Aorta (tissue), 5 donors: ENCODE measurements at regions of chr3 and their contacts with region 1.

Region 1: DNA sequence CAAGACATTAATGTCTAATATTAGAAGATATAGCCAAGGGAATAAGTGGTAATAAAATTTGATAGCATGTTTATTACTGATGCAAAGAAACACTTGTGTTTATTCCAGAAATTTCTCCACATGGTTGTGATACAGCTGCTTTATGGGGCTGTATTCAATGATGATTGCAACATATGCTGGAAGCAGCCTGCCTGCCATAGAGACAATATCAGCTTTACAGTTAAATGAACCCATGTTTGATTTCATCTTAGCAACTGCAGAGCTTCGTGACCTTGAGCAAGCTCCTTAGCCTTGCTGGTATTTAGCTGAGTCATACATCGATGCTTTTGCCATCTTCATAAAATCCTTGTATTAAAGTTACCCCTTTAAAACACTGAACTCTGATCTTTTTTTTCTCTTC is 168.1 kb upstream of the STAC start:
- DNase-seq: no peak
- ATAC-seq: no peak
- H3K4me3 ChIP-seq: no peak overlapping the region
- H3K27ac ChIP-seq: no peak overlapping the region
- H3K4me1 ChIP-seq: peaks cover 1 to 8% of the 10 kb centered on the region in 2 donors
- H3K27me3 ChIP-seq: no peaks in the 10 kb centered on the region

Region 2: DNA sequence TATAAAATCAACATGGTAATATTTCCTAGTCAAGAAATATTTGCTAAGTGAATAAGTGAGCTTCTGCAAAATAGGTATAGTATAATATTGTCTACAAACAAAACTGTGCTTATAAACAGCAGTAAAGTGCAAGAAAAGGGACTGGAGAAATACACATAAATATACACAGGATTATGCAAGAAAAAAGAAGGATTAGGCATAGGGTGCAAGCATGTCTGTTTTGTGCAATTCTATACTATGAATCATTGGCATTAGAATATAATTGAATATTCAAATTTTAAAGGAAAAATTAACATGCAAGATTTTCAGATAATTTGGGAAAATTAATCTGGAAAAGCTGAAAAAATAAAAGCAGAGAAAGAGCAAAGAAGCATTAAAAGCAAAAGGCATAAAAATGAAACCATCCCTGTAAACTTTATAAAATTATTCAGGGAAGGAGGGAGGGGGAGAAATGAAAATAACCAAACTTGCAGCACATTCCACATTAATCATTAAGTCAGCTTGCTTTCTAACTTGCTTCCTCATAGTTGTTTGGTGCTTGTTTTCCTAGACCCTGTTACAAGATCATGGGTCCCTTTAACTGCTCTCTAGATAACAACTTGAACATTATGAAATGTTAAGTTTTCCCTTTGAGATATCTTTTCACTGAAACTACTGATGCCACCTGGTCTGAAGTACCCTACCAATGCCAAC is 20.7 kb after region 1 on chr3:
- intact Hi-C with region 1: no loop called
- DNase-seq: no peak
- ATAC-seq: no peak
- H3K4me3 ChIP-seq: no peak overlapping the region
- H3K27ac ChIP-seq: no peak overlapping the region
- H3K4me1 ChIP-seq: no peaks in the 10 kb centered on the region
- H3K27me3 ChIP-seq: no peaks in the 10 kb centered on the region

Region 3: DNA sequence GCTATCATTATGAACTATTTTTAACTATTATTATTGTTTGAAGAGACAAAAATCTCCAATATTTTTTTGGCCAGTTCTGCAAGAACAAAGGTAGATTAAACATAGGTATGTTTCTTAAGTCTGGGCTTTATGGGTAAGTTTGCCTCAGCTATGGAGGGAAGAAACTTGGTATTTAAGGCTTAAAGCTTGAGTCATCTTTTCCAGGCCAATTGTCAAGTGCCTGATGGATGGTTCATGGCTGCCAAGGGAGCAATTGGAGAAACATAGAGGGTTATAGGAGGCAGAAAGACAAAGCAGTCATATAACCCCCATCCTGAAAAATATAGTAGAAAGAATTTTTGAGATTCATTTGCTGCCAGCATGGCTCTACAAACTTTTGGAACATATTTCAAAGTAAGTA is 160.8 kb after region 1 on chr3:
- intact Hi-C with region 1: loop called in 1 of 2 experiments (anchors 5 kb)
- DNase-seq: no peak
- ATAC-seq: peak; percentile 78
- H3K4me3 ChIP-seq: no peak overlapping the region
- H3K27ac ChIP-seq: peak overlapping the region in 1 of 2 donors; percentile 89
- H3K4me1 ChIP-seq: peaks cover 0 to 7% of the 10 kb centered on the region in 2 donors
- H3K27me3 ChIP-seq: no peaks in the 10 kb centered on the region